ENCODE measurements at regions of chr4 and their contacts with region 1.

Region 1: DNA sequence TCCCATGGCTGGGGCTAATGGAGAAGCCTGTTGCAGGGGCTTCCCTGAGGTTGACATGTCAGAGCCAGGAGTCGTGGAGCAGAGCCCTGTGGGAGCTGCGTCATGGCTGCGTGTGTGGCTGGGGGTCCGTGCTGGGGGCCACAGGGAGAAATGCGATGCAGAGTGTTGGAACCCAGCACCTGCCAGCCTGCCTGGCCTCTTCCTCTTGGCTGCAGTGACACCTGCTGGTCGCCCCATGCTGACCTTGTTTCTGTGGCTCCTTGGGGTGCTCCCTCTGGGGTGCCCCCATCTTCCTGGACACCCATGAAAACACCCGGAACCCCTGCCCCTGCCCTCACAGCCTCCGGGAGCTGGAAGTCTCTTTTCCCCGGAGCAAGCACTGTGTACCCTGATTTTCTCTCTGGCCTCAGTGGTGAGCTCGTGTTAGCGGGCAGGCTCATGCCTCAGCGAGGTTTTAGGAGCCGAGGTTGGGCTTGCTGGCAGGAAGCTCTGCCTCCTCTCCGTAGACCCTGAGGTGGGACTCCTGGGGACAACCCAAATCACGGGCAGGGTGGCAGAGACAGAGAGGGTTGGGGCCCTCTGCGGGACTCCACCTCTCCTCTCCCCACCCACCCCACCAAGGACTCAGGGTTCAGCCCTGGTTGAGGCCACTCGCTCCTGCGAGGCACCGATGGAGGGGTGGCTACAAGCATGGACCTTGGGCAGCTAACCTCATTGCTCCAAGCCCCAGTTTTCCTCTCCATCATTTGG is 103.7 kb downstream of the SORCS2 start:
- DNase-seq: peak in 8 of 10 donors; percentile 53 to 79 (median 68)
- H3K4me3 ChIP-seq: peak overlapping the region in 12 of 59 donors; percentile 7 to 53 (median 20)
- H3K27ac ChIP-seq: peak overlapping the region in 52 of 59 donors; percentile 26 to 88 (median 77)
- H3K27me3 ChIP-seq: no peaks in the 10 kb centered on the region
- CTCF ChIP-seq: peak; percentile 14 to 82 (median 67)

Region 2: DNA sequence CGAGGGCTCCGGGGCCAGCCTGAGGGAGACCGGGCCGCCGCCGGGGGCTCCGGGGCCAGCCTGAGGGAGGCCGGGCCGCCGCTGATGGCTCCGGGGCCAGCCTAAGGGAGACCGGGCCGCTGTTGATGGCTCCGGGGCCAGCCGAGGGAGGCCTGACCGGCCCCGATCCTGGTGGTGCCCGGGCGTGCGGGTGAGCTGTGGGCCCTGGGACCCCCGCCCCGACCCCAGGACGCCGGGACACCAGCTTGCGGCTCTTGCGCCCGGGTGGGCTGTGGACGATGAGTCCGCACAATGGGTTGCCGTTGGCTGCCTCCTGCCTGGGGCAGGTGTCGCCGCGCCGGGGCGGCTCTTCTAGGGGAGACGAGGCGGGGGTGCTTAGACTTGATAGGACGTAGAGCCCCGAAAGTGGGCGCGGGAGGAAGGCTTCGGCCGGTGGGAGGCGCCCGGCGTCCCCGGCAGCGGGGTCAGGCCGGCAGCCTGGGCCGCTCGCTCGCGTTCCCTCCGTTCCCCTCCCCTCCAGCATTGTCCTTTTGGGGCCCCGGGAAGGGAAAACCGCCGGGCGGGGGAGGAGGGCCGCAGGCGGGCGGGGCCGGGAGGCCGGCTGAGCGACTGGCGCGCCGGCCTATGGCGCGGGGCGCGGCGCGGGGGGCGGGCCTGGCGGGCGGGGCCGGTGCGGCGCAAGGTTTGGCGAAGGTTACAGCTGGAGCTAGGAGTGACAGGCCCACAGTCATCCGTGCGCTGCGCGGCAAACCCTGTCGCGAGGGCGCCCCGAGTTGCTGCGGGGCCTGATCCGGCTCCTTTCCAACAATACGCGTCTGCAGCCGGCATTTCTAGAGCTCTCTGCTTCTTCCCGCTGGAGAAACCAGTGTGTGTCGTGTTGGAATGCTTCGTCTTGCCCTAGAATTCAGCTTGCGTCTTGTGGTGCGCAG is 512.8 kb before region 1 on chr4:
- intact Hi-C with region 1: no loop called
- DNase-seq: peak; percentile 83 to 95 (median 91)
- H3K4me3 ChIP-seq: peak overlapping the region; percentile 66 to 100 (median 97)
- H3K27ac ChIP-seq: peak overlapping the region; percentile 84 to 100 (median 99)
- H3K27me3 ChIP-seq: no peaks in the 10 kb centered on the region
- CTCF ChIP-seq: peak in 45 of 56 donors; percentile 6 to 65 (median 36)

Region 3: GRCh38 chr4:6974138-6974848 is 321.8 kb before region 1 on chr4:
- intact Hi-C with region 1: loop called in 1 of 2 experiments (anchors 10 kb)
- DNase-seq: peak; percentile 70 to 90 (median 82)
- H3K4me3 ChIP-seq: peak overlapping the region in 3 of 59 donors; percentile 15 to 18 (median 15)
- H3K27ac ChIP-seq: peak overlapping the region in 7 of 59 donors; percentile 6 to 61 (median 23)
- H3K27me3 ChIP-seq: no peaks in the 10 kb centered on the region
- CTCF ChIP-seq: peak; percentile 91 to 99 (median 98)

Region 4: DNA sequence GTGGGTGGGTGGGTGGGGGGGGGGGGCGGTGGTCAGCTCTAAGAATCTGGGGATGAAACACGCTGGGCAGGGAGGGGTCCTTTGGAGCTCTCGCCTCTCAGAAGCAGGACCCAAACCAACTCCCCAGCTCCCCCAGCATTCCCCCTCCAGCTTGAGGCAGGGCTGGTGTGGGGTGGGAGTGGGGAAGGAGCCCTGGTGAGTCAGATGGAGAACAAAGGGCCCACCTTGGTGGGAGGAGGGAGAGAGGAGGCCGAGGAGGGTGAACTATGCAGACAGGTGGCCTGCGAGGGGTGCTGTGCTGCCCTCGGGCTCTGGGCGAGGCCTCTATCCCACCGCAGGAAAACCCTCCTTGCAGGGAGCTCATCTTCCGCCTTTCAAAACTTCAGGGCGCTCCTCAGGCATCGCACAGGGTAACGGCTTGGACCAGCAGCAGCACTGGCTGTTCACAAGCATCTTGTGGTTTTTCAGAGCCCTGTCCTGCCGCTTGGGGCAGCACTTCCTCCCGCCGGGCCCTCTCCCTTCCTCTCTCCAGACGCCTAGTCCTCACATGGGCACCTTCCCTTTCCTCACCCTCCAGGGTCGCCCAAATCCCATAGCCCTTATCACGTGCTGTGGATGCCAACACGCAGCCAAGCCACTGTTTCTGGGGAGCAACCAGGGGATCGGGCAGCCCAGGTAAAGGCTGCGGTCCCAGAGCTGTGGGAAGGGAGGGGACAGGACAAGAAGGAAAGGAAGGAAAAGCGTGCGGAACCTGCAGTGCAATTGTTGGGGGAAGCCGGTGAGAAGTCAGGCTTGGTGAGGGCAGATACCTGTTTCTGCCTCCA is 194.2 kb before region 1 on chr4:
- intact Hi-C with region 1: loop called (anchors 5 to 10 kb)
- DNase-seq: peak; percentile 69 to 88 (median 84)
- H3K4me3 ChIP-seq: peak overlapping the region; percentile 34 to 84 (median 68)
- H3K27ac ChIP-seq: peak overlapping the region in 47 of 59 donors; percentile 3 to 98 (median 92)
- H3K27me3 ChIP-seq: no peaks in the 10 kb centered on the region
- CTCF ChIP-seq: peak; percentile 46 to 91 (median 76)

Region 5: DNA sequence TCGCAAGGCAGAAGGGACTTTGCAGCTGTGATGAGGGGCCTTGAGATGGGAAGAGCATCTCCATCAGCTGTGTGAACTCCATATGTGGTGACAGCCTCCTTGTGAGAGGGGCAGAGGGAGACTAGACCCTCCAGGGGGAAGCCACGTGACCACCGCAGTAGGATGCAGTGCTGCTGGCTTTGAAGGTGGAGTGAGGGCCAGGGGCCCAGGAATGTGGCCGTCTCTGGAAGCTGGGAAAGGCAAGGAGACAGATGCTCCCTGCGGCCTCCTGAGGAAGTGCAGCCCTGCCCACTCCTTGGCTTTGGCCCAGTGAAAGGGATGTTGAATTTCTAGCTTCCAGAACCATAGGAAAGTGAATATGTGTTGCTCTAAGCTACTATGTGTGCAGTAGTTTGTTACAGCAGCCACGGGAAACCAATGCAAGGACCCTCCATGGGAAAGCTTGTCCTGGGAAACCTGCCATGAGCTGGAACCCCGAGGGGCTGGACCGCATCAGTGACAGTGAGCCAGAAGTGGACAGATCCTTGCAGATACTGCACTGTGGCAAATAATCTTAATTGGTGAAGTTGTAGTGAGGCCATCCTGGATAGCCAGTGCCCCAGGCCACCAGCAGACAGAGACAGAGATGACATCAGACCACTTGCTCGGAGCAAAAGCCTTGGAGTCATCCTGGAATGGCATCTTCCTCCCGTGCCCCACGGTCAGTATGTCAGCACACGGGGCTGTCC is 139.2 kb before region 1 on chr4:
- intact Hi-C with region 1: no loop called
- DNase-seq: peak; percentile 17 to 66 (median 46)
- H3K4me3 ChIP-seq: no peak overlapping the region
- H3K27ac ChIP-seq: no peak overlapping the region
- H3K27me3 ChIP-seq: no peaks in the 10 kb centered on the region
- CTCF ChIP-seq: peak in 52 of 56 donors; percentile 15 to 66 (median 49)

Region 6: GRCh38 chr4:7192252-7193029 is 103.6 kb before region 1 on chr4 and contains the start of gene SORCS2:
- intact Hi-C with region 1: loop called (anchors 1 to 2 kb)
- DNase-seq: peak; percentile 43 to 90 (median 65)
- H3K4me3 ChIP-seq: peak within 1 kb of the TSS; percentile 44 to 82 (median 67)
- H3K27ac ChIP-seq: peak within 1 kb of the TSS in 22 of 59 donors; percentile 3 to 78 (median 33)
- H3K27me3 ChIP-seq: peaks cover 0 to 35% (median 0%) of the 10 kb centered on the region in 45 donors
- CTCF ChIP-seq: peak; percentile 15 to 94 (median 73)
- total RNA-seq, gene SORCS2: 17.6 to 63.7 (median 32.1) TPM

Region 7: GRCh38 chr4:7206911-7207567 is 89.0 kb before region 1 on chr4:
- intact Hi-C with region 1: no loop called
- DNase-seq: peak in 9 of 10 donors; percentile 50 to 89 (median 68)
- H3K4me3 ChIP-seq: no peak overlapping the region
- H3K27ac ChIP-seq: peak overlapping the region in 18 of 59 donors; percentile 8 to 69 (median 38)
- H3K27me3 ChIP-seq: peaks cover 0 to 3% (median 0%) of the 10 kb centered on the region in 45 donors
- CTCF ChIP-seq: peak in 1 of 56 donors; percentile 11

Region 8: GRCh38 chr4:7254736-7255487 is 41.2 kb before region 1 on chr4:
- intact Hi-C with region 1: loop called in 1 of 2 experiments (anchors 5 kb)
- DNase-seq: no peak
- H3K4me3 ChIP-seq: no peak overlapping the region
- H3K27ac ChIP-seq: no peak overlapping the region
- H3K27me3 ChIP-seq: no peaks in the 10 kb centered on the region
- CTCF ChIP-seq: no peak

Region 9: DNA sequence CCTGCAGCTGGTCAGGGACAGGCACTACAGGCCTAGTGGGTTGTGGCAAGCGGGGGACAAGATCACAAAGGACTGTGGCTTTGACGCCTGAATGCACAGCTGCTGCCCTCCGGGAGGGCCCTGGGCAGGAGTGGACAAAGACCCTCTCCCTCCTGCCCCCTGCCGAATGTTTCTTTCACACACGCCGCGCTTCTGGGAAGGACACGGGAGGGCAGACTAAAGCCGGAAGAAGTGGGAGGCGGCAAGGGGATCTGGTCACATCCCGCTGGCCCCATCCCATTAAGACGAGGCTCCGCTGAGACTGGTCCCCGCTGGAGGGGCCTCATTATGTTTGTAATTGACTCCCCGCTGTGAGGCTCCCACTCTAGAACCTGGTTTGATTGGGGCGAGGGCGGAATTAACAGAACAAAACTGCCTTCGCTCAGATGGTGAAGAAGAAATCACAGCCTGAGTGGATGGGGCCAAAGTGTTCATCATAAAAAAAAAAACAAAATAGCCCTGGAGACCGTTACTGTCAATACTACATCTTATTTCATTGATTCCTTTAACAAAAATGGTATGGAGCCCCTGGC is 176.4 kb after region 1 on chr4:
- intact Hi-C with region 1: no loop called
- DNase-seq: no peak
- H3K4me3 ChIP-seq: no peak overlapping the region
- H3K27ac ChIP-seq: no peak overlapping the region
- H3K27me3 ChIP-seq: no peaks in the 10 kb centered on the region
- CTCF ChIP-seq: no peak

Measured in dorsolateral prefrontal cortex (tissue), 120 donors.